Heart left ventricle (tissue), 16 donors: ENCODE measurements at regions of chr3 and their contacts with region 1.

Region 1: GRCh38 chr3:192816351-192816750 is 89.0 kb upstream of the FGF12 start:
- DNase-seq: no peak
- ATAC-seq: no peak
- H3K4me3 ChIP-seq: no peak overlapping the region
- H3K27ac ChIP-seq: no peak overlapping the region
- H3K4me1 ChIP-seq: peaks cover 0 to 26% (median 12%) of the 10 kb centered on the region in 12 donors
- H3K27me3 ChIP-seq: no peaks in the 10 kb centered on the region
- CTCF ChIP-seq: peak; percentile 59 to 89 (median 74)
- POLR2A ChIP-seq: no peak

Region 2: DNA sequence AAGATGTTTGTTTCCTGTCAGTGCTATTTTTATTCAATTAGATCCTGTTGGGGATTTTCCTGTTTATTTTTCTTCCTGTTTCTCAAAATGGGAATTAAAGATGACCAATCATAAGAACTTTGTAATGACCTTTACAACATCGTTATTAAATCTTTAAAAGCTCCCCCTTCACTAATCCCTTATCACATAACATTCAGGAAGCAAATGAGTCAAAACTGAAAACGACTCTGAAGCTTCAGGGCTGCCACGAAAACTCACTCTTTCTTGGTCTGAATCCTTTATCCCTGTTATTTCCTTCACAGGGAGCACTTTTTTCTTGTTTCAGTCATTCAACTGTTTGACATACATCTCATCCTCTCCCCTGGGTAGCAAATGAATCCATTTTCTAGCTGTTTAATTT is 177.1 kb after region 1 on chr3:
- intact Hi-C with region 1: no loop called
- DNase-seq: no peak
- ATAC-seq: no peak
- H3K4me3 ChIP-seq: no peak overlapping the region
- H3K27ac ChIP-seq: peak overlapping the region in 8 of 12 donors; percentile 4 to 43 (median 12)
- H3K4me1 ChIP-seq: peaks cover 0 to 13% (median 5%) of the 10 kb centered on the region in 12 donors
- H3K27me3 ChIP-seq: no peaks in the 10 kb centered on the region
- CTCF ChIP-seq: no peak
- POLR2A ChIP-seq: no peak

Region 3: DNA sequence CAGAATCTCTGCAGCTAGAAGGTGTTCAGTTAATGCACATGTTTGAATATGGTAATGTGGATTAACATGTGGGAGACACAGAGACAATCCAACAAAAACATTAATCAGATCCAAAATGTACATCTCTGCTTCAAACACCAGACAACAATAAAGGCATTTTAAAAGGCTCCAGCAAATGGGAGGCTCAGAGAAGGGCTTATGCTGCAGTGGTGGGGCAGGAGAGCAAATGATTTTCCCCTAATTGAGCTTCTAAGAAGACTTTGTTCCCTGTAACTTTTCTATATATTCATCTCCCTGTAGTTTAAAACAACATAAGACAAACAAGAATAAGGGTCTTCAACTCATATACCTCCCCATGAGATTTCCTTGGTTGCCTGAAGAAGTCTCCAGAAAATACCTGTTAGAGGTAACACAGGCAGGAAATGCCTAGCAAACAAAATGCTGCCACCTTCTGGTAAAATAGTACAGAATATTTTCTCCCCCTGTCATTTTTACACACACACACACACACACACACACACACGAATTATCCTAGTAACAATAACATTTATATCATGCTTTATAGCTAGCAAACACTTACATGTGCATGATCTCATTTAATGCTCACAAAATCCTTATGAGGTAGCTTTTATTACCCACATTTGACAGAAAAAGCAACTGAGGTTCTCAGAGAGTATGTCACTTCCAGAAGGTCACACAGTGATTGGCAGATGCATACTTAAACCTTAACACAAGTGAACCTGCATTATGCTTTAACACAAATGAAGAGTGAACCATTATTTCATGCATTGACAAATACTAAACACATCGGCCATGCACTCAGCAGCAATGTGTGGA is 224.7 kb after region 1 on chr3:
- intact Hi-C with region 1: loop called (anchors 1 to 2 kb)
- DNase-seq: no peak
- ATAC-seq: peak in 1 of 4 donors; percentile 46
- H3K4me3 ChIP-seq: no peak overlapping the region
- H3K27ac ChIP-seq: no peak overlapping the region
- H3K4me1 ChIP-seq: no peaks in the 10 kb centered on the region
- H3K27me3 ChIP-seq: no peaks in the 10 kb centered on the region
- CTCF ChIP-seq: peak; percentile 31 to 71 (median 57)
- POLR2A ChIP-seq: no peak

Region 4: GRCh38 chr3:193229851-193230425 is 413.6 kb after region 1 on chr3:
- intact Hi-C with region 1: no loop called
- DNase-seq: no peak
- ATAC-seq: no peak
- H3K4me3 ChIP-seq: no peak overlapping the region
- H3K27ac ChIP-seq: no peak overlapping the region
- H3K4me1 ChIP-seq: no peaks in the 10 kb centered on the region
- H3K27me3 ChIP-seq: no peaks in the 10 kb centered on the region
- CTCF ChIP-seq: no peak
- POLR2A ChIP-seq: no peak

Region 5: GRCh38 chr3:193452338-193452737 is 636.0 kb after region 1 on chr3:
- intact Hi-C with region 1: loop called in 3 of 10 experiments (anchors 5 to 10 kb)
- DNase-seq: no peak
- ATAC-seq: no peak
- H3K4me3 ChIP-seq: no peak overlapping the region
- H3K27ac ChIP-seq: no peak overlapping the region
- H3K4me1 ChIP-seq: no peaks in the 10 kb centered on the region
- H3K27me3 ChIP-seq: no peaks in the 10 kb centered on the region
- CTCF ChIP-seq: peak in 10 of 12 donors; percentile 7 to 43 (median 27)
- POLR2A ChIP-seq: no peak

Region 6: GRCh38 chr3:193465992-193466608 is 649.7 kb after region 1 on chr3:
- intact Hi-C with region 1: loop called in 4 of 10 experiments (anchors 5 to 10 kb)
- DNase-seq: no peak
- ATAC-seq: no peak
- H3K4me3 ChIP-seq: no peak overlapping the region
- H3K27ac ChIP-seq: no peak overlapping the region
- H3K4me1 ChIP-seq: peaks cover 0 to 6% (median 0%) of the 10 kb centered on the region in 12 donors
- H3K27me3 ChIP-seq: no peaks in the 10 kb centered on the region
- CTCF ChIP-seq: no peak
- POLR2A ChIP-seq: no peak

Region 7: DNA sequence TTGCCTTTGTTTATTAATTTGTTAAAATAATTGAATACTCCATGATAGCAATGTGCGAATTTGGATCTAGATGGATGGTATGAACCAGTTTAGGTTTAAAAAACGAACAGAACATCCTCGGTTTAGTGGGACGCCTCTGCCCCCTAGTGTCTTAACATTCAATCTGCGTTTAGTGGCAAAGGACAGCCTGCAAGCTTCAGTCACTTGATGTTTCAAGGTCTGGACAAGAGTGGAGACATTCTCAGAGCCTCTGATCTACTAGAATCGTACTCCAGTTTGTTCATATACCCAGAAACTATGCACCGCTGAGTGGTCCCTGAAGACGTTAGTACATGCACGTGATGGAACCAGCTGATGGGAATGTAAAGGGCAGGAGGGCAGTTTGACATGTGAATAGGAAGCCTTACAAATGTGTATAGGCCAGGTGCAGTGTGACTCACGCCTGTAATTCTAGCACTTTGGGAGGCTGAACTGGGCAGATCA is 756.1 kb after region 1 on chr3:
- intact Hi-C with region 1: loop called in 8 of 10 experiments (anchors 1 to 5 kb)
- DNase-seq: peak in 4 of 5 donors; percentile 37 to 48 (median 42)
- ATAC-seq: peak; percentile 37 to 79 (median 70)
- H3K4me3 ChIP-seq: no peak overlapping the region
- H3K27ac ChIP-seq: no peak overlapping the region
- H3K4me1 ChIP-seq: no peaks in the 10 kb centered on the region
- H3K27me3 ChIP-seq: no peaks in the 10 kb centered on the region
- CTCF ChIP-seq: peak; percentile 56 to 87 (median 74)
- POLR2A ChIP-seq: no peak